ENCODE measurements at regions of chr14 and their contacts with region 1.

Region 1: DNA sequence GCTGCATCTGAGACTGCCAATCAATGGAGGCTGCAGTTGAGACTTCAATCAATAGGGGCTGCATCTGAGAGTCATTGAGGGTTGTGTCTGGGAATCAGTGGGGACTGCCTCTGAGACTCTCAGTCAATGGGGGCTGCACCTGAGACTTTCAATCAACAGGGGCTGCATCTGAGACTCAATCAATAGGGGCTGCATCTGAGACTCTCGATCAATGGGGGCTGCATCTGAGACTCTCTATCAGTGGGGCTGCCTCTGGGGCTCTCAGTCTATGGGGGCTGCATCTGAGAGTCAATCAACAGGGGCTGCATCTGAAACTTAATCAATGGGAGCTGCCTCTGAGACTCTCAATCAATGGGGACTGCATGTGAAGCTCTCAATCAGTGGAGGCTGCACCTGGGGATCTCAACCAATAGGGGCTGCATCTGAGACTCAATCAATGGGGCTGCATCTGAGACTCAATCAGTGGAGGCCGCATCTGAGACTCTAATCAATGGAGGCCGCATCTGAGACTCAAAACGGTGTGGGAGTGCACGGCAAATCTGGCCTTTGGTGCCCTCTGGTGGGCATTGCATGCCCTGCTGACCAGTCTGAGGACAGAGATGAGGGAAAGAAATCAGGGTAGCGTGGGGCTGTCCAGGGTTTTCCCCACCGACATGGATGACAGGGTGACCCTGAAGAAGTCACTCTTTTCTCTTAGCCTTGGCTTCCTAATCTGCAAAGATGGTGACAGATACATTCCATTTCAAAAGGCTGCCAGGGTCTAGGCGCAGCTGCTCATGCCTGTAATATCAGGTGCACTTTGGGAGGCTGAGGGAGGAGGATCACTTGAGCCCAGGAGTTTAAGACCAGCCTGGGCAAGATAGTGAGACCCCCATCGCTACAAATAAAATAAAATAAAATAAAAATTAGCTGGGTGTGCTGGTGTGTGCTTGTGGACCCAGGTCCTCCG is 41.3 kb upstream of the EIF5 start:
- DNase-seq: peak; percentile 41
- H3K4me3 ChIP-seq: no peak overlapping the region
- H3K27ac ChIP-seq: no peak overlapping the region
- H3K4me1 ChIP-seq: peaks cover 6% of the 10 kb centered on the region
- H3K27me3 ChIP-seq: no peaks in the 10 kb centered on the region
- CTCF ChIP-seq: peak; percentile 91 to 97

Region 2: DNA sequence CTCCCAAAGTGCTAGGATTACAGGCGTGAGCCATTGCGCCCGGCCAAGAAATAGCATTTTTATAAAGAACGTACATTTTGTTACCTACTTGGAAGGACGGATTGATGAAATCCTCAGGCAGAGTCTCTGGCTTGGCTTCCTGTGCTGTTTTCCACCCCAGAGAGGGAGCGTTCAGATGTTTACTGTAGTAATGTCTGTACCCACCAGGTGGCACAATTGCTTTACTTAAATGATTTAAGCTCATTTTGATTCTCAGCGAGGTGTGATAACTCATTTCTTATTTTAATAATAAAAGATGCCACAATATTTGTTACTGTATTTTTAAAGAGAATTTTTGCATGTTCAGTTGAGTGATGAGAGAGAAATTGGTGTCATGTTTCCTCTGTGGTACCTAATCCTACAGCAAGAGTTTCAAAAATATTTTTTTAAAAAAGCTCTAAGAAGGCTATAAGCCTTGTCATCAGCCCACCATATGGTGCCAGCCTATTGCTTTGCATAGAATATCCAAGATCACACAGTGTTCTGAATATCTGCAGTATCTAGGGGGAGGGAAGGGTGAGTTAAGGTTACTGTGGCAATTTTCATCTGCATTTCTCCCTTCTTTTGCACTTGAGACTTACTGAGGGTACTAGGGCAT is 598.1 kb before region 1 on chr14:
- CTCF ChIA-PET with region 1: no interaction called
- dilution Hi-C with region 1: no loop called
- in situ Hi-C with region 1: no loop called
- intact Hi-C with region 1: loop called (anchors 1 kb)
- DNase-seq: peak; percentile 54
- H3K4me3 ChIP-seq: no peak overlapping the region
- H3K27ac ChIP-seq: no peak overlapping the region
- H3K4me1 ChIP-seq: peaks cover 7% of the 10 kb centered on the region
- H3K27me3 ChIP-seq: no peaks in the 10 kb centered on the region
- CTCF ChIP-seq: peak; percentile 52 to 55

Region 3: DNA sequence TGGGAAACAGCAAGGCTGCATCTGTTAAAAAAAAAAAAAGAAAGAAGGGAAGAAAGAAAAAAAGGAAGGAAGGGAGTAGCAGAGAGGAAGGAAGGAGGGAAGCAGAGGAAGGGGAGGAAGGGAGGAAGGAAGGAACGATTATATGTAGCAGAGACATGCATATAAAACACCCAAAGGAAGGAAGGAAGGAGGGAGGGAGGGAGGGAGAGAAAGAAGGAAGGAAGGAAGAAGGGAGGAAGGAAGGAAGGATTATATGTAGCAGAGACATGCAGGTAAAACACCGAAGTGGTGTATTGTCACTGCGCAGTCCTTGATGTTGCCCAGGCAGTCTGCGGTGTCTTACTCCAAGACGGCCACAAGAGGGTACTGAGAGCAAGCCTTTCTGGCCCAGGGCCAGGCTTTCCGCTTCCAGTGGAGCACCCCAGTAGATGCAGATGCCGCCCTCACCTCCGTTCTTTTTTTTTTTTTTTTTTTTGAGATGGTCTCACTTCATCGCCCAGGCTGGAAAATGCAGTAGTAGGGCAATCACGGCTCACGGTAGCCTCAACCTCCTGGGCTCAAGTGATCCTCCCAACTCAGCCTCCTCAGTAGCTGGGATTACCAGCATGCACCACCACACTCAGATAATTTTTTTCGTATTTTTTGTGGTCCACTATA is 214.5 kb before region 1 on chr14:
- CTCF ChIA-PET with region 1: interaction called, 4 read pairs
- dilution Hi-C with region 1: no loop called
- in situ Hi-C with region 1: loop called (anchors 5 to 10 kb)
- intact Hi-C with region 1: loop called (anchors 1 kb)
- DNase-seq: peak; percentile 58
- H3K4me3 ChIP-seq: no peak overlapping the region
- H3K27ac ChIP-seq: no peak overlapping the region
- H3K4me1 ChIP-seq: peaks cover 7% of the 10 kb centered on the region
- H3K27me3 ChIP-seq: no peaks in the 10 kb centered on the region
- CTCF ChIP-seq: peak; percentile 82 to 85

Region 4: DNA sequence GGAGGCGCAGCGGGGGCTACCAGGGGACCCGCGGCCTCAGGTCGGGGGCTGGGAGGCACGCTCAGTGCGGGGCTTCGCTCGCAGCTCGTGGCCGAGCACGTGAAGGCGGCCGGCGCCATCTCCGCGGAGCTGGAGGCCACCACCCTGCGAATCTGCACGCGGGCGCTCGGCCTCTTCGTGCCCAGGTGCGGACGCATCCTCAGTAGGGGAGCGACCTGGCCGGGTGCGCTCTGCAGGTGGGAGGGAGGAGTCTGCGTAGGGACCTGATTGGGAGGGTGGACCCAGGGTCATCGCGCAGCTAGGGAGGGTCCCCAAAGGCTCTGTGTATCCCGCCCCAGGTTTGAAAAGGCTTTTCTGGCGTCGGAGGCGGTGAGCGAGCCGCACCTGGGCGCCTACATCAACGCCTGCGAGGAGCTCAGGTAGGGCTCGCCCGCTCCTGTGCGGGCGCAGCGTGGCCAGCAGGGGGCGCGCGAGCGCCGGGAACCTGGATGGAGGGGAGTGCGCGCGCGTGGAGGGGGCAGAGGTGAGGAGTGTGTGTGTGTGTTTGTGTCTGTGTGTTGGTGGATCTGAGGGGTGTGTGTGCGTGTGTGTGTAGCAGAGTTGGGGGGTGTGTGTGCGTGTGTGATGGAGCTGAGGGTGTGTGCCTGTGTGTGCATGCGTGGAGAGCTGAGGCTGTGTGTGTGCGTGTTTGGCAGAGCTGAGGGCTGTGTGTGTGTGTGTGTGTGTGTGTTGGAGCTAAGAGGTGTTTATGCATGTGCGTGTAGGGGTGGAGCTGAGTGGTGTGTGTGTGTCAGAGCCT is 187.8 kb before region 1 on chr14:
- CTCF ChIA-PET with region 1: interaction called, 6 read pairs
- dilution Hi-C with region 1: no loop called
- in situ Hi-C with region 1: loop called in 1 of 2 experiments (anchors 10 kb)
- intact Hi-C with region 1: loop called (anchors 1 kb)
- DNase-seq: peak; percentile 62
- H3K4me3 ChIP-seq: peak overlapping the region in 1 of 3 experiments; percentile 16
- H3K27ac ChIP-seq: no peak overlapping the region
- H3K4me1 ChIP-seq: peaks cover 14% of the 10 kb centered on the region
- H3K27me3 ChIP-seq: peaks cover 30% of the 10 kb centered on the region
- CTCF ChIP-seq: peak; percentile 86 to 96

Region 5: DNA sequence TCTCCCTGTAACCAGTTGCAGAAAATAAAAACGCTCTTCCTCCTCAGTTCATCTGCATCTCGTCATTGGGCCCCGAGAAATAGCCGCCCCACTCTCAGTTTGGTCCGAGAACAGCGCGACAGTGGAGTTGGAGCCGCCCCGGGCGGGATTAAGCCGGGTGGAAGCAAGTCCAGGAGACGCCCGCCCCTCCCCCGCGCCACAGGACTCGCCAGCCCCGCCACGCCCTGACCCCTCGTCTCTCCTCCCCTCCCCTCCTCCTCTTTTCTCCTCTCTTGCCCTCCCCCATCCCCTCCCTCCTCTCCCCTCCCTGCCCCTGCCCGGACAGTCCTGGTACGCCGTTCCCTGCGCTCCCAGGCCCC is 85.7 kb before region 1 on chr14:
- CTCF ChIA-PET with region 1: no interaction called
- dilution Hi-C with region 1: no loop called
- in situ Hi-C with region 1: no loop called
- intact Hi-C with region 1: no loop called
- DNase-seq: no peak
- H3K4me3 ChIP-seq: no peak overlapping the region
- H3K27ac ChIP-seq: no peak overlapping the region
- H3K4me1 ChIP-seq: peaks cover 7% of the 10 kb centered on the region
- H3K27me3 ChIP-seq: peaks cover 10% of the 10 kb centered on the region
- CTCF ChIP-seq: no peak

Region 6: DNA sequence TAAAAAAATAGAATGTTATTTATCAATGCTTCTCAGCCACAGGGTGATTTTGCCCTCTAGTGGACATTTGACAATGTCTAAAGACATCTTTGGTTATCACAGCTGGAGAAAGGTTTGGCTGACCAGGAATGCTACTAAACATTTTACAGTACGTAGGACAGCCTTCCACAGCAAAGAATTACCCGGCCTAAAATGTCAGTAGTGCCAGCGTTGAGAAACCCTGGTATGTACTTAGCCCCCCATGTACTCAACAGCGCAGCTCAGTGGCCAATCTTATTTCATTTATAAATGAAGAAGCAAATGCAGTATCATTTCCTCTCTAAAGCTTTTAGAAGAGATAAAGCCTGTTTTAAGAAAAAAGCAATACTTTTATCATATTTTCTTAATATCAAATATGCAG is 98.3 kb after region 1 on chr14:
- CTCF ChIA-PET with region 1: no interaction called
- dilution Hi-C with region 1: no loop called
- in situ Hi-C with region 1: no loop called
- intact Hi-C with region 1: loop called (anchors 1 kb)
- DNase-seq: peak; percentile 51
- H3K4me3 ChIP-seq: no peak overlapping the region
- H3K27ac ChIP-seq: no peak overlapping the region
- H3K4me1 ChIP-seq: peaks cover 25% of the 10 kb centered on the region
- H3K27me3 ChIP-seq: no peaks in the 10 kb centered on the region
- CTCF ChIP-seq: peak; percentile 70 to 74

Region 7: GRCh38 chr14:103628684-103629502 is 336.2 kb after region 1 on chr14 and contains the start of gene KLC1:
- CTCF ChIA-PET with region 1: no interaction called
- dilution Hi-C with region 1: no loop called
- in situ Hi-C with region 1: no loop called
- intact Hi-C with region 1: no loop called
- DNase-seq: peak; percentile 73
- H3K4me3 ChIP-seq: peak within 1 kb of the TSS; percentile 82 to 94 (median 90)
- H3K27ac ChIP-seq: peak within 1 kb of the TSS; percentile 94
- H3K4me1 ChIP-seq: peaks cover 43% of the 10 kb centered on the region
- H3K27me3 ChIP-seq: no peaks in the 10 kb centered on the region
- CTCF ChIP-seq: no peak
- total RNA-seq, gene KLC1: 216 to 237 TPM